HEK293 (cell line): ENCODE measurements at regions of chr1 and their contacts with region 1.

Region 1: DNA sequence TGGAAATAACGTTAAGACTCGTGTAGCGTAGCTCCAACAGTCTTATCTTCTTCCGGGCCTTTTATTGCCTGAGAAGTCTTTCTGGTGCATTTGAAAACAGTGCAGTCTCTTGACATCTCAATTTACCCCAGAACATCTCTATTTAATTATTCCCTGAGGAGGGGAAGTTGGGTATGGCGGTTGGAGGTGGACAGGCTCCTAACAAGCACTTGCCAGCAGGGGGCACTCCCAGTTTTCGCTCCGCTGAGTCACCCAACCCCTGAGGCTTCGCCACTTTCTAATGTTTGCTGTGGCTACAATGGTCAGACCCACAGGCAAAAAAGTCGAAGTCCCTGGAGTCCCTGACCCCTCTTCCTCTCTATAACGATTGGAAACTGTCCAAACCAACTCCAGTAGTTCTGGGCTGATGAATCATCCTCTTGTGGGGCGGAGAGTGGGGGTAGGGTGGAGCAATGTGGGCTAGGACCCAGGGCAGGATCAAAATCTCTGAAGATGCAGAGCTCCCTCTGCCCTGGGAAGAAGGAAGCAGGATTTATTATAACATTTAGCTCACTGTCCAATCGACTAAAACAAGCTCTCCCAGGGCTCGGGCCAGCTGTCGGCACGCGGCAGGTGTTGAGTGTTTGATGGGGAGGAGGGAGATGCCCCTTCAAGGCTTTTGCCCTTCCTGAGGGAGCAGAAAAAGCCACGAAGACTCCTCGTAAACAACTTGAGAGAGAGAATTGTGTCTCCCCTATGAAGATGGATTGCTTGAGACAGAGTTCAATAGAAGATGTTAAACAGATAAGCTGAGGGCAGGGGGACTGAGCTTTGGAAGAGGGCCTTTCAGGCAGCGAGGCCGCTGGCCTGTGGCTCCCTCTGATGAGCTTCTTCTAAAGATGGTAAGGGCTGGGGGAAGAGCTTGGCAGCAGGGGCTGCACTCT is 85.7 kb downstream of the BRINP2 start:
- H3K4me3 ChIP-seq: no peak overlapping the region
- H3K27ac ChIP-seq: peak overlapping the region; percentile 85
- H3K4me1 ChIP-seq: peaks cover 19% of the 10 kb centered on the region
- CTCF ChIP-seq: peak; percentile 78

Region 2: GRCh38 chr1:177355595-177355994 is 99.2 kb after region 1 on chr1:
- CTCF ChIA-PET with region 1: interaction called, 44 read pairs
- POLR2A ChIA-PET with region 1: no interaction called
- H3K4me3 ChIP-seq: no peak overlapping the region
- H3K27ac ChIP-seq: no peak overlapping the region
- H3K4me1 ChIP-seq: no peaks in the 10 kb centered on the region
- CTCF ChIP-seq: peak; percentile 75